Activated naive CD4-positive, alpha-beta T cell treated with anti-CD3 and anti-CD28 coated beads for 36 hours (primary cell): ENCODE measurements at regions of chr17 and their contacts with region 1.

Region 1: GRCh38 chr17:44947461-44948314 is at the start of gene KIF18B:
- DNase-seq: peak; percentile 97
- H3K4me3 Mint-ChIP-seq: peak within 1 kb of the TSS; percentile 84
- H3K27ac Mint-ChIP-seq: peak within 1 kb of the TSS; percentile 74
- H3K4me1 Mint-ChIP-seq: peaks cover 7% of the 10 kb centered on the region
- H3K27me3 Mint-ChIP-seq: peaks cover 5% of the 10 kb centered on the region
- total RNA-seq, gene KIF18B: 54.9 to 55.4 TPM

Region 2: DNA sequence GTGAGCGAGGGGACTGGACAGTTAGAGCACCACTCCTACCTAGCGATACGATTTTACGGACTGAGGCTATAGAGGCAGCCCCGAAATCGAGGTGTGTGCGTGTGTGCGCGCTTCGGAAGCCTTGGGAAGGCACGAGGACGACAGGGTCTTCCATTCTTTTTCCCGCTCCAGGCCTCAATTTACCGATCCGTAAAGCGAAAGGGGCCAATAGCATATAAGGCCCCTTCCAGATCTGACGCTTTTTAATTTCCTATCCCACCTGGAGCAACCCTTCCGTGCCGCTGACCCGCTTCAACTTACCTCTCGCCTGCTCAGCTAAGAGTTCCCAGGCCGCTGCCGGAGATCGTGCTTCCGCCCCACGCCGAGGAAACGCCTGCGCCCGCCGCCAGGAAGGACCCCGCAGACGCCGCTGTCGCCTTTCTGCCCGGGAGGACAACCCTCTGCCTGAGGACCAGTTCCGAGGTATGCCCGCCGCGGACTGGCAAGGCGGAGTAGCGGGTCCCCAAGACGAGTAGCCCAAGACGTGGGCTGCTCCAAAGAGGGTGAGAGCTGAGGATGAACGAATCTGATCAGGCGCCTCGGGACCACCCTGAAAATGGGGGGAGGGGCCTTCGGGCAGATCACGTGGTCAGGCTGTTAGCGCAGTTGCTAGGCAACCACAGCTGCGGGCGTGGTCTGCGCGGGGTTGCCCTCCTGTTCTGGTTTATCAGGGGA is 48.5 kb before region 1 on chr17 and contains the start of gene EFTUD2:
- CTCF ChIA-PET with region 1: no interaction called
- intact Hi-C with region 1: loop called (anchors 1 kb)
- DNase-seq: peak; percentile 94
- H3K4me3 Mint-ChIP-seq: peak within 1 kb of the TSS; percentile 90
- H3K27ac Mint-ChIP-seq: peak within 1 kb of the TSS; percentile 97
- H3K4me1 Mint-ChIP-seq: peaks cover 25% of the 10 kb centered on the region
- H3K27me3 Mint-ChIP-seq: peaks cover 2% of the 10 kb centered on the region
- total RNA-seq, gene EFTUD2: 170 to 176 TPM

Region 3: DNA sequence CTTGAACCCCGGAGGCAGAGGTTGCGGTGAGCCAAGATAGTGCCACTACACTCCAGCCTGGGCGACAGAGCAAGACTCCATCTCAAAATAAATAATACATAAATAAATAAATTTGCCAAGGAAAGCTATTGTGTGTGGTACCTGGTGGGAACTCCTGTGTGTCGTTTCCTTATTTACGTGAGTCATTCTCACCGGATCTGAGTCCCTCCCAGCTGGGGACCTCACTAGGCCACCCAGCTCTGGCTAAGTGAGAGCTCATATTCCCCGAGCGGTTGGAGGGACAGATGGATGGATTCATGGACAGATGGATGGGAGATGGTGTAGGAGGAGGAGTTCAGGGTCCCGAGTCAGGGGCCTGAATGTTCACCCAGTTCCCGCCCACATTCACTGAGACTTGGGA is 43.3 kb after region 1 on chr17:
- CTCF ChIA-PET with region 1: no interaction called
- intact Hi-C with region 1: loop called (anchors 1 kb)
- DNase-seq: no peak
- H3K4me3 Mint-ChIP-seq: no peak overlapping the region
- H3K27ac Mint-ChIP-seq: no peak overlapping the region
- H3K4me1 Mint-ChIP-seq: peaks cover 12% of the 10 kb centered on the region
- H3K27me3 Mint-ChIP-seq: peaks cover 21% of the 10 kb centered on the region

Region 4: GRCh38 chr17:45051060-45051719 is 103.5 kb after region 1 on chr17 and contains the start of gene DCAKD:
- CTCF ChIA-PET with region 1: no interaction called
- intact Hi-C with region 1: loop called (anchors 1 kb)
- DNase-seq: peak; percentile 93
- H3K4me3 Mint-ChIP-seq: peak within 1 kb of the TSS; percentile 82
- H3K27ac Mint-ChIP-seq: peak within 1 kb of the TSS; percentile 93
- H3K4me1 Mint-ChIP-seq: peaks cover 41% of the 10 kb centered on the region
- H3K27me3 Mint-ChIP-seq: no peaks in the 10 kb centered on the region
- total RNA-seq, gene DCAKD: 38.1 to 38.9 TPM